ENCODE measurements at regions of chr10 and their contacts with region 1.

Region 1: GRCh38 chr10:110354322-110354766 is 49.6 kb upstream of the SMNDC1 start:
- DNase-seq: peak; percentile 64 to 86 (median 76)
- ATAC-seq: peak; percentile 28
- H3K4me3 ChIP-seq: no peak overlapping the region
- H3K4me3 Mint-ChIP-seq: peak overlapping the region; percentile 40
- H3K27ac ChIP-seq: no peak overlapping the region
- H3K27ac Mint-ChIP-seq: peak overlapping the region; percentile 96
- H3K4me1 ChIP-seq: peaks cover 60% of the 10 kb centered on the region
- H3K4me1 Mint-ChIP-seq: peaks cover 53% of the 10 kb centered on the region
- H3K27me3 ChIP-seq: no peaks in the 10 kb centered on the region
- H3K27me3 Mint-ChIP-seq: no peaks in the 10 kb centered on the region
- CTCF ChIP-seq: peak; percentile 67

Region 2: DNA sequence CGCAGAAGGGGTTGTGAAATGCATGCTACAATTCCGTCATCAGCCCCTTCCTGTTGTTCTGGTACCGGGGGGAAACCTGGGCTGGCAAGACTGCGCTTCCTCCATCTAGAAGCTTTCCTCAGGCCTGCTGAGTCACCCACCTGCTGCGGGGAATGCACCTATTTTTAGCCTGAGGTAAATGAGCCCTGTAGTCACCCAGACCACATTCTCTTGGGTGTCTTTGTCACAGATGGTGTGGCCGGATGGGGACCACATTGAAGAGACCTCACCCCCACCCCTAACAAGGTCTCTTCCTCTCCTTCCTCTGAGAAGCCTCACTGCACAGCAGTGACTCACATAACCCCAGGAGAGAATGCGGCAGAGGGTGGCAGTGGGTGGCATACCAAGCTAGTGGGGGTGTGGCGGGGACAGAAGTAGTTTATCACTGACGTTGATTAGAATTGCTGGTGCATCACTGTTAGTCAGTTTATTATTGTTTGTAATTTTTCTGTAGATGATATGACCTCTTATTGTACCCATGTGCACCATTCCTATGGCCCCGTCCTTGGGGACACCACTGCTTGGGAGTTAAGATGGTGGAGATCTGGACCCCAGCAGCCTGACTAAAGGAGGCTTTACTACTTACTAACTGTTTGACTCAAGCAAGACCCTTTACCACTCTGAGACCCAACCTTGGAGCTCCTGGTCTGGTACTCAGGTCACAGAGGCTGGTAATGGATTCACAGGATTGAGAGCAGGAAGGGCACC is 60.4 kb after region 1 on chr10:
- CTCF ChIA-PET with region 1: interaction called, 8 read pairs
- POLR2A ChIA-PET with region 1: no interaction called
- intact Hi-C with region 1: loop called in 1 of 2 experiments (anchors 1 kb)
- DNase-seq: peak; percentile 60 to 96 (median 82)
- ATAC-seq: peak; percentile 95
- H3K4me3 ChIP-seq: no peak overlapping the region
- H3K4me3 Mint-ChIP-seq: peak overlapping the region; percentile 22
- H3K27ac ChIP-seq: peak overlapping the region in 1 of 2 donors; percentile 26
- H3K27ac Mint-ChIP-seq: peak overlapping the region; percentile 79
- H3K4me1 ChIP-seq: peaks cover 47% of the 10 kb centered on the region
- H3K4me1 Mint-ChIP-seq: peaks cover 20% of the 10 kb centered on the region
- H3K27me3 ChIP-seq: no peaks in the 10 kb centered on the region
- H3K27me3 Mint-ChIP-seq: no peaks in the 10 kb centered on the region
- CTCF ChIP-seq: no peak

Region 3: GRCh38 chr10:110502851-110503301 is 148.5 kb after region 1 on chr10:
- CTCF ChIA-PET with region 1: interaction called, 17 read pairs
- POLR2A ChIA-PET with region 1: interaction called, 15 read pairs
- intact Hi-C with region 1: loop called in 1 of 2 experiments (anchors 1 kb)
- DNase-seq: peak in 4 of 14 experiments; percentile 13 to 70 (median 56)
- ATAC-seq: no peak
- H3K4me3 ChIP-seq: peak overlapping the region; percentile 10
- H3K4me3 Mint-ChIP-seq: peak overlapping the region; percentile 72
- H3K27ac ChIP-seq: peak overlapping the region in 1 of 2 donors; percentile 82
- H3K27ac Mint-ChIP-seq: peak overlapping the region; percentile 79
- H3K4me1 ChIP-seq: peaks cover 84% of the 10 kb centered on the region
- H3K4me1 Mint-ChIP-seq: peaks cover 73% of the 10 kb centered on the region
- H3K27me3 ChIP-seq: no peaks in the 10 kb centered on the region
- H3K27me3 Mint-ChIP-seq: no peaks in the 10 kb centered on the region
- CTCF ChIP-seq: no peak

Region 4: GRCh38 chr10:110547139-110547761 is 192.9 kb after region 1 on chr10:
- CTCF ChIA-PET with region 1: interaction called, 10 read pairs
- POLR2A ChIA-PET with region 1: interaction called, 4 read pairs
- intact Hi-C with region 1: loop called (anchors 1 to 2 kb)
- DNase-seq: peak in 3 of 14 experiments; percentile 77 to 79 (median 78)
- ATAC-seq: peak; percentile 80
- H3K4me3 ChIP-seq: no peak overlapping the region
- H3K4me3 Mint-ChIP-seq: no peak overlapping the region
- H3K27ac ChIP-seq: no peak overlapping the region
- H3K27ac Mint-ChIP-seq: no peak overlapping the region
- H3K4me1 ChIP-seq: no peaks in the 10 kb centered on the region
- H3K4me1 Mint-ChIP-seq: peaks cover 6% of the 10 kb centered on the region
- H3K27me3 ChIP-seq: peaks cover 0 to 10% of the 10 kb centered on the region in 2 experiments
- H3K27me3 Mint-ChIP-seq: peaks cover 21% of the 10 kb centered on the region
- CTCF ChIP-seq: peak; percentile 92

Region 5: DNA sequence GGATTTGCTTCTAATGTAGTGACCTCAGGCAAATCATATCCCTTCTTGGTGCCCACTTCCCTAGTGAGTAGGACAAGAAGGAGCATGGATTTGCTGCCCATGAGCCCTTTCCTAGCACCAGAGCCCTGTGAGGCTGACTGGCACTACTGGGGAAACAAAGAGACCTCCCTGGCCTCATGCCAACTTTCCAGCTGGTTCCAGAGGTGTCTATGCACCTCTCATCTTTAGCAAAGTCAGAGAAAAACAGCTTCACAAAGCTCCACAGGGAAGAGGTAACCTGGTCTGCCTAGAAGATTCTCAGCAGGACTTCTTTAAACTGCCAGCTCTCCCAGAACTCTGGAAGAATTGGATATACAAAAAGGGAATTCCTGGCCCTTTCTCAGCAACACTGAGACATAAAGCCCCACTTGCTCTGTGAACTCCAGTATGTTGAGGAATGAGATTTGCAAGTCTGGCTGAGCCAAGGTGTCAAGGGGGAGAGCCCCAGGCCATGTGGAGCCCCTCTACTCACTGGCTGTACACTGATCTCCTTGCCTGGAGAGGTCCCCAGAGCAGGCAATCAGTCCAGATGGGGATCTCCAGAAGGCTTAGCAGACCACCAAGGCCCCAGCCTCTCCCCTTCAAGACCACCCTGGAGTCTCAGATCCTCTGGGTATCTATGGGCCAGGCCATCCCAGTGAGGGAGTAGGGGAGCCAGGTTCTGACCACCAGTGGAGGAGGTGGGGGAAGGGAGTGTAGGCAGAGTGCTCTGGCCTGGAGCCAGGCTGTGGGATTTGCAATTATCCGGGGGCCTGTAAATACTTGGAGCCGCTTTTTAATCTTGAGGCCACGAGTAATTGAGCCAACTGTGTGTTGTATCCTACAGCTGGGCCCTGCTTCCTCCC is 265.4 kb after region 1 on chr10:
- CTCF ChIA-PET with region 1: no interaction called
- POLR2A ChIA-PET with region 1: no interaction called
- intact Hi-C with region 1: no loop called
- DNase-seq: no peak
- ATAC-seq: no peak
- H3K4me3 ChIP-seq: no peak overlapping the region
- H3K4me3 Mint-ChIP-seq: no peak overlapping the region
- H3K27ac ChIP-seq: no peak overlapping the region
- H3K27ac Mint-ChIP-seq: no peak overlapping the region
- H3K4me1 ChIP-seq: peaks cover 11% of the 10 kb centered on the region
- H3K4me1 Mint-ChIP-seq: peaks cover 10% of the 10 kb centered on the region
- H3K27me3 ChIP-seq: no peaks in the 10 kb centered on the region
- H3K27me3 Mint-ChIP-seq: no peaks in the 10 kb centered on the region
- CTCF ChIP-seq: no peak

Measured in CD4-positive, alpha-beta T cell (primary cell).